ENCODE measurements at regions of chr5 and their contacts with region 1.

Region 1: GRCh38 chr5:95781101-95781583 is 41.4 kb downstream of the GLRX start:
- DNase-seq: peak; percentile 54 to 82 (median 66)
- H3K4me3 ChIP-seq: peak overlapping the region; percentile 14
- H3K4me3 Mint-ChIP-seq: peak overlapping the region; percentile 2 to 83 (median 78)
- H3K27ac ChIP-seq: no peak overlapping the region
- H3K27ac Mint-ChIP-seq: peak overlapping the region in 5 of 8 donors; percentile 6 to 87 (median 51)
- H3K4me1 ChIP-seq: no peaks in the 10 kb centered on the region
- H3K4me1 Mint-ChIP-seq: peaks cover 6 to 14% (median 13%) of the 10 kb centered on the region in 3 donors
- H3K27me3 ChIP-seq: no peaks in the 10 kb centered on the region
- H3K27me3 Mint-ChIP-seq: no peaks in the 10 kb centered on the region

Region 2: GRCh38 chr5:95646554-95647431 is 134.3 kb before region 1 on chr5 and contains the start of gene RFESD:
- CTCF ChIA-PET with region 1: interaction called, 18 read pairs
- POLR2A ChIA-PET with region 1: no interaction called
- DNase-seq: peak; percentile 90 to 95 (median 93)
- H3K4me3 ChIP-seq: peak within 1 kb of the TSS; percentile 85
- H3K4me3 Mint-ChIP-seq: peak within 1 kb of the TSS; percentile 85 to 94 (median 89)
- H3K27ac ChIP-seq: peak within 1 kb of the TSS; percentile 86
- H3K27ac Mint-ChIP-seq: peak within 1 kb of the TSS; percentile 84 to 96 (median 91)
- H3K4me1 ChIP-seq: peaks cover 21% of the 10 kb centered on the region
- H3K4me1 Mint-ChIP-seq: peaks cover 20 to 33% (median 32%) of the 10 kb centered on the region in 3 donors
- H3K27me3 ChIP-seq: no peaks in the 10 kb centered on the region
- H3K27me3 Mint-ChIP-seq: no peaks in the 10 kb centered on the region
- total RNA-seq, gene RFESD: 4.2 to 5.4 TPM

Region 3: DNA sequence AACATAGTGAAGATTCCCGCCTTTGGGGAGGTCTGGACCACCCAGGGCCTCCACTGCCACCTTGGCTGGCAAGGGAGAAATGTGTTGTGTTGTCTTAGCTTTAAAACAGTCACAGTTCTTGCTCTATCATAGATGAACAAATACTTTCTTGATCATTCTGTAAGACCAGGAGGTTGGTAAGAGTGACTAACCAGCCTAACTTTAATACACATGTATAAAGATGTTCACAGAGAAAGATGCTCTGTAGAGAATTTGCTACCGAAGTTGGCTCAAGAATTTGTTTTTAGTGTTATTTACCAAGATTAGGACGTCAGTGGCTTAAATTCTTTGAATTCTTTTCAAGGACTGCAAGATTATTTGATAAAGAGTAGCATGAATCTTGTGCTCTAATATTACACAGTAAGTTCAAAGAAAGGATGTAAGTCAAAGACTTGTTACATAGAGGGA is 13.0 kb after region 1 on chr5:
- CTCF ChIA-PET with region 1: interaction called, 25 read pairs
- POLR2A ChIA-PET with region 1: no interaction called
- DNase-seq: no peak
- H3K4me3 ChIP-seq: no peak overlapping the region
- H3K4me3 Mint-ChIP-seq: no peak overlapping the region
- H3K27ac ChIP-seq: no peak overlapping the region
- H3K27ac Mint-ChIP-seq: no peak overlapping the region
- H3K4me1 ChIP-seq: no peaks in the 10 kb centered on the region
- H3K4me1 Mint-ChIP-seq: no peaks in the 10 kb centered on the region
- H3K27me3 ChIP-seq: no peaks in the 10 kb centered on the region
- H3K27me3 Mint-ChIP-seq: peaks cover 0 to 2% of the 10 kb centered on the region in 2 donors

Region 4: GRCh38 chr5:95822542-95823181 is 41.5 kb after region 1 on chr5 and contains the start of gene GLRX:
- CTCF ChIA-PET with region 1: interaction called, 82 read pairs
- POLR2A ChIA-PET with region 1: interaction called, 10 read pairs
- DNase-seq: peak; percentile 45 to 70 (median 59)
- H3K4me3 ChIP-seq: peak within 1 kb of the TSS; percentile 96
- H3K4me3 Mint-ChIP-seq: peak within 1 kb of the TSS; percentile 97 to 100 (median 99)
- H3K27ac ChIP-seq: peak within 1 kb of the TSS; percentile 25
- H3K27ac Mint-ChIP-seq: peak within 1 kb of the TSS; percentile 65 to 100 (median 94)
- H3K4me1 ChIP-seq: peaks cover 49% of the 10 kb centered on the region
- H3K4me1 Mint-ChIP-seq: peaks cover 58 to 71% (median 63%) of the 10 kb centered on the region in 3 donors
- H3K27me3 ChIP-seq: no peaks in the 10 kb centered on the region
- H3K27me3 Mint-ChIP-seq: no peaks in the 10 kb centered on the region
- total RNA-seq, gene GLRX: 22.2 to 25.0 TPM

Region 5: DNA sequence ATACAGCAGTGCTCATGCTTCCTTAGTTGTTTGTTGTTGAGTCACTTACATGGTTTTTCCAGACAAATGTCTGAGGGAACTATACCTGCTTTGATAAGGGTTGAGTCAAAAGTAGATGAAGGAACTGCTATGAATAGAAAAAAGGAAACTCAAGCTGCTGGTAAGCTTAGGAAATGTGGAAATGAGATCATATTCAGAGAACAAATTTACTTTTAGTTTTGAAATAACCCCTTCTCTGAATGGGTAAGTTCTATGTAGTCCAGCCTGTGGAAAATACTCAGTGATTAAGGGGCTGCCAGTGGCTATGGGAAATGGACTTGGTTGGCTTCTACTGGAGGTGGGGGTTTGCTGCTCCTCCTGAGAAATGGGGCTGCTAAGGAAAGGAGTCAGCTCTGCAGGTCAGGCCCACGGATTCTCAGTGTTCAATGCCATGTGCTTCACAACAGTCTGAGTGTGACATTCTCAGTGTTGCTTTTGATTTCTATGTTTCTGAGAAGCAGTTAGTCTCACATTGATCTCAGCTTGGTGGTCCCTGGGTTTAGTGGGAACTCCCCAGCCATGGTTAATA is 89.0 kb after region 1 on chr5:
- CTCF ChIA-PET with region 1: interaction called, 13 read pairs
- POLR2A ChIA-PET with region 1: no interaction called
- DNase-seq: no peak
- H3K4me3 ChIP-seq: no peak overlapping the region
- H3K4me3 Mint-ChIP-seq: peak overlapping the region in 6 of 7 donors; percentile 29 to 86 (median 44)
- H3K27ac ChIP-seq: no peak overlapping the region
- H3K27ac Mint-ChIP-seq: peak overlapping the region in 5 of 8 donors; percentile 46 to 81 (median 63)
- H3K4me1 ChIP-seq: peaks cover 35% of the 10 kb centered on the region
- H3K4me1 Mint-ChIP-seq: peaks cover 26 to 34% (median 34%) of the 10 kb centered on the region in 3 donors
- H3K27me3 ChIP-seq: no peaks in the 10 kb centered on the region
- H3K27me3 Mint-ChIP-seq: peaks cover 0 to 5% of the 10 kb centered on the region in 2 donors

Measured in CD8-positive, alpha-beta memory T cell (primary cell).